Pancreas (tissue), 10 donors: ENCODE measurements at regions of chr5 and their contacts with region 1.

Region 1: GRCh38 chr5:16666883-16667398 is 50.1 kb upstream of the RETREG1 start:
- DNase-seq: peak in 4 of 6 donors; percentile 44 to 70 (median 59)
- ATAC-seq: peak; percentile 73 to 79 (median 77)
- H3K4me3 ChIP-seq: peak overlapping the region in 2 of 4 donors; percentile 12 to 14
- H3K27ac ChIP-seq: peak overlapping the region; percentile 12 to 86 (median 46)
- H3K4me1 ChIP-seq: peaks cover 0 to 37% (median 9%) of the 10 kb centered on the region in 3 donors
- H3K27me3 ChIP-seq: no peaks in the 10 kb centered on the region
- CTCF ChIP-seq: peak in 3 of 4 donors; percentile 13 to 49 (median 41)

Region 2: DNA sequence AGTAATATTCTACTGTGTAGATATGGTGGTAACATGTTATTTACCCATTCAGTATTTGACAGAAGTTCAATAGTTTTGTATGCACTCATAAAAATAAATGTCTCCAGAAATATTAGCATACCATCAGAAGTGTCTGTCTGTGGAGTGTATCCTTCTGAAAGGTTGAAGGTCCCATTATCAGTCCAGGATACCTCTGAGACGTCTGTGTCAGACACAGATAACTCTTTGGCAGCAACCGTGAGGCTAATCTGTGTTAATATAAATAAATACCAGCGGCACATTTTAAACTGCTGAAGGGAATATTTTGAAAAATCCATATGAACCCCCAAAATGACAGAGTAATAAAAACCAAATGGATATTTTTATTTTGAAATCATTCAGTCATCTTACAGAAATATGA is 189.4 kb before region 1 on chr5:
- intact Hi-C with region 1: loop called in 1 of 3 experiments (anchors 5 kb)
- DNase-seq: no peak
- ATAC-seq: no peak
- H3K4me3 ChIP-seq: no peak overlapping the region
- H3K27ac ChIP-seq: no peak overlapping the region
- H3K4me1 ChIP-seq: peaks cover 0 to 3% (median 0%) of the 10 kb centered on the region in 3 donors
- H3K27me3 ChIP-seq: no peaks in the 10 kb centered on the region
- CTCF ChIP-seq: no peak